ENCODE measurements at regions of chr7 and their contacts with region 1.

Region 1: GRCh38 chr7:139340037-139340807 is 915 bp upstream of the FMC1 start:
- DNase-seq: peak; percentile 99
- H3K4me3 ChIP-seq: peak overlapping the region; percentile 88
- H3K27ac ChIP-seq: peak overlapping the region; percentile 100
- H3K4me1 ChIP-seq: peaks cover 4% of the 10 kb centered on the region
- H3K27me3 ChIP-seq: no peaks in the 10 kb centered on the region
- CTCF ChIP-seq: peak; percentile 86

Region 2: GRCh38 chr7:138974675-138975292 is 365.4 kb before region 1 on chr7:
- CTCF ChIA-PET with region 1: no interaction called
- POLR2A ChIA-PET with region 1: interaction called, 14 read pairs
- intact Hi-C with region 1: no loop called
- DNase-seq: no peak
- H3K4me3 ChIP-seq: no peak overlapping the region
- H3K27ac ChIP-seq: no peak overlapping the region
- H3K4me1 ChIP-seq: peaks cover 18% of the 10 kb centered on the region
- H3K27me3 ChIP-seq: peaks cover 9% of the 10 kb centered on the region
- CTCF ChIP-seq: no peak

Region 3: DNA sequence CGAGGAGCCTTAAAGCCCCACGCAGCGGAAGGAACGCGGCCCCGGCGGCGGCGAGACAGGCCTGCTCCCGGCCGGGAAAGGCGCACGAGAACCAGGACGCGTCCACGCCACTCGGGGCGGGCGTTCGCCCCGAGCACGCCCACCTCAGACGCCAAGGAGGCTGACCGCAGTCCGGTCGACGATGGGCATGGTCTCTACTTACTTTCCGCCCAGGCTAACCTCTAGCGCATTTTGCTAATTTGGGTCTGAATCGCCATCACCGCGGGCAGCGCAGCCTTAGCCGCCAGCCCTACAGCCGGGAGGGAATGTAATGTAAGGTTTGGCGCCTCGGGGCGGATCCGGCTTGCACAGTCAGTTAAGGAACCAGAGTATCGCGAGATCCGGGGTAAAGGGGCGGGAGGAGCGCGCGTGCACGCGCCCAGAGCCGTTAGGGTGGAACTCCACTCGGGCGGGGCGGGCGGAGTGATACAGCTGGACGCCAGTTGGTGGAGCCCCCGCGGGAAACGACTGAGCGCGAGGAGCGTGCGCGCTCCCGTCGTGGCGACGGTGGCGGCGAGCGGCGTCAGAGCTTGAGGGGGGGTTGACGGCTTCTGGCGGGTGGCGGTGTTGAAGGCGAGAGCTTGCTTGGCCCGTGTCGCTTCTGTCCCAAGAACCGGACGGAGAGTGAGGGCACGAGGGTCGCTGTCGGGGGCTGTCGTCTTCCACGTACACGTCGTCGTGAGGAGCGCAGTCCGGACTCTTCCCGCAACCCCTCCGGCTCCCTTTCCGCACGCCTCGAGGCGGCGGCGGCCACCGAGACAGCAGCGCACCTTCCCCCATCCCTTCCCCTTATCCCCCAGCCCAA is 19.4 kb after region 1 on chr7 and contains the start of gene LUC7L2:
- CTCF ChIA-PET with region 1: no interaction called
- POLR2A ChIA-PET with region 1: no interaction called
- intact Hi-C with region 1: loop called (anchors 2 kb)
- DNase-seq: peak; percentile 99
- H3K4me3 ChIP-seq: peak within 1 kb of the TSS; percentile 85
- H3K27ac ChIP-seq: peak within 1 kb of the TSS; percentile 97
- H3K4me1 ChIP-seq: peaks cover 16% of the 10 kb centered on the region
- H3K27me3 ChIP-seq: no peaks in the 10 kb centered on the region
- CTCF ChIP-seq: no peak
- total RNA-seq, gene LUC7L2: 98.7 and 107 TPM in 2 replicates